ENCODE measurements at regions of chr16 and their contacts with region 1.

Region 1: GRCh38 chr16:61820398-61820797 is 215.8 kb downstream of the CDH8 start:
- DNase-seq: peak; percentile 82
- ATAC-seq: peak; percentile 97
- H3K4me3 ChIP-seq: no peak overlapping the region
- H3K27ac ChIP-seq: peak overlapping the region; percentile 55
- H3K4me1 ChIP-seq: peaks cover 28% of the 10 kb centered on the region
- H3K27me3 ChIP-seq: no peaks in the 10 kb centered on the region
- CTCF ChIP-seq: no peak

Region 2: GRCh38 chr16:61836804-61837393 is 16.5 kb after region 1 on chr16:
- CTCF ChIA-PET with region 1: no interaction called
- POLR2A ChIA-PET with region 1: no interaction called
- intact Hi-C with region 1: loop called (anchors 1 kb)
- DNase-seq: no peak
- ATAC-seq: no peak
- H3K4me3 ChIP-seq: no peak overlapping the region
- H3K27ac ChIP-seq: no peak overlapping the region
- H3K4me1 ChIP-seq: no peaks in the 10 kb centered on the region
- H3K27me3 ChIP-seq: no peaks in the 10 kb centered on the region
- CTCF ChIP-seq: no peak

Region 3: GRCh38 chr16:61887903-61888302 is 67.5 kb after region 1 on chr16:
- CTCF ChIA-PET with region 1: no interaction called
- POLR2A ChIA-PET with region 1: no interaction called
- intact Hi-C with region 1: no loop called
- DNase-seq: peak; percentile 25
- ATAC-seq: no peak
- H3K4me3 ChIP-seq: no peak overlapping the region
- H3K27ac ChIP-seq: peak overlapping the region; percentile 32; the same call in 1 of the 2 replicates
- H3K4me1 ChIP-seq: peaks cover 26% of the 10 kb centered on the region
- H3K27me3 ChIP-seq: no peaks in the 10 kb centered on the region
- CTCF ChIP-seq: no peak

Region 4: DNA sequence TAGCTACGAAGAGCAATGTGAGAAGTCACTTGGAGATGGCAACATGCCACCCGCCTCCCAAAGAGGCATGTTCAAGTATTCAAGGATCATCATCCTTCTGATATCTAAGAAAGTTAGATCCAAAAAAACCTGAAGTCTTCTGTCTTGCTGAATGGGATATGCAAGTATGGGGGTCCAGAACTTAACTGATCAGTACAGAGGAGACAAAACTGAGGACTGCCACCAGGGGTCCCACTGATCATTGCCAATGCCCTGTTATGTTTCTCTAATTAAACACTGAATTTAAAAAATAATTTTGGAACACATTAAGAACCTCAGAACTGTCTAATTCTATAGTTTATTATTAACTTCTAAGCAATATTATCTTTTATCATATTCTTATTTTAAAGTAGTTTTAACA is 116.1 kb after region 1 on chr16:
- CTCF ChIA-PET with region 1: no interaction called
- POLR2A ChIA-PET with region 1: no interaction called
- intact Hi-C with region 1: no loop called
- DNase-seq: peak; percentile 11
- ATAC-seq: no peak
- H3K4me3 ChIP-seq: no peak overlapping the region
- H3K27ac ChIP-seq: no peak overlapping the region
- H3K4me1 ChIP-seq: peaks cover 5% of the 10 kb centered on the region
- H3K27me3 ChIP-seq: no peaks in the 10 kb centered on the region
- CTCF ChIP-seq: peak; percentile 59

Measured in PC-3 (cell line).